OCI-LY7 (cell line): ENCODE measurements at regions of chr21 and their contacts with region 1.

Region 1: DNA sequence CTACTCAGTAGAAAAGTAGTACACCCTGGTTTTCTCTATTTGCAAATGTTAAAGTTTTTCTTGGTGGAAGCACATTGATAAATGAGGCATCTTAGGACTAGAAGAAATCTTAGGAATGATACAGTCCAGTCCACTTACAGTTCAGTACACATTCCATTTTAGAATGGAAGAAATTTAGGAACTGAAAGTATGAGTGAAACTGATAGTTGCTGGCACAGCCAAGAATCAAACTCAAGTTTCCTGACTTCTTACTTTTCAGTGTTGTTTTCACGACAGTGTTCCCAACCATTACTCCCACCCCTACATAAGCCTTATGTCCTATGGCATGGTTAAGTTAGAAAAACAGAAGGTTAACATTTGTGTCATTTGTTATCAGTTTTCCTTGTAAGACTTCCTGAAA is 258.5 kb downstream of the BACH1 start:
- DNase-seq: no peak
- H3K4me3 ChIP-seq: no peak overlapping the region
- H3K27ac ChIP-seq: no peak overlapping the region
- H3K4me1 ChIP-seq: no peaks in the 10 kb centered on the region
- CTCF ChIP-seq: no peak

Region 2: GRCh38 chr21:29613021-29613420 is 55.8 kb after region 1 on chr21:
- CTCF ChIA-PET with region 1: no interaction called
- POLR2A ChIA-PET with region 1: no interaction called
- intact Hi-C with region 1: loop called (anchors 10 kb)
- DNase-seq: no peak
- H3K4me3 ChIP-seq: no peak overlapping the region
- H3K27ac ChIP-seq: no peak overlapping the region
- H3K4me1 ChIP-seq: no peaks in the 10 kb centered on the region
- CTCF ChIP-seq: no peak